T-cell (primary cell): ENCODE measurements at regions of chr9 and their contacts with region 1.

Region 1: DNA sequence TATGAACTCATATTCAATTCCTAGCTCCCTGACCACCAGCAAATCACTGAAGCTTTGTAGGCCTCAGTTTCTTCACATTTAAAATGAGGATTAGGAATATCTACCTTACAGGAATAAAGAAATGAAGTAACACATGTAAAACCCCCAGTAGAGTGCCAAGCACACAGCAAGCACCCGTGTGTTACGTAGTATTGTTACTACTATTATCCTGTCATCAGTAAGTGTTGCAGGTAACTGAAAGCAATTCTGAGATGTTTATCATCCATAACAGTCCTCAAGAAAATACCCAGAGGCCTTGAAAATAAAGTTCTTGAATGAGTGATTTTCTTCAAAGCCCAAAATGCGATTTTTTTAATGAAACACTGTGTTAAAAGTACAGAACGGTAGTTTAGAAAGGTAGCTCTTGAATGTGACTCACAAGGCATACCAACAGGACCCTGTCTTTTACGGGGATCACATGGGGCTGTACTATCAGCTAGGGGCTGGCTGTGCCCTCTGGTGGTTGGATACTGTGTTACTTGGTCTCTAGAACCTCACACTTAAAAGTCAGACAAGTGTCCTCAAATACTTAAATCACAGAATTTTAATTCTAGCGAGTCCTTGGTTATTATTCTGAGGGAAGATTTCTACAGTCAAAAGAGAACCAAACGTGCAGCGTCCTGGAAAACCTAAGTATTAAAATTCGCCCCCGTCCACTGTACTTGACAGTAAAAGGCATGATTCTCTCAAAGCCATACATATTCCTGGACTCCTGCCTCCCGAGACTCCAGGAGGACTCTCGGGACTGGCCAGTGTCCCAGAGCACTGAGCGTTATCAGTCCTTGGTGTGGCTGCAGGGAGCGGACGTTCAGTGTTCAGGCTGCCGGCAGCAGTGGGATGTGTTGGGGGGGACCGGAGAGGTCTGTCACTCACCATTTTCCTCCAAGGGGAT is 725 bp downstream of the NDUFB6 start:
- DNase-seq: peak; percentile 41 to 89 (median 75)
- ATAC-seq: peak; percentile 83 to 87 (median 86)
- H3K4me3 ChIP-seq: peak overlapping the region; percentile 84 to 100
- H3K4me3 Mint-ChIP-seq: peak overlapping the region; percentile 98 to 99 (median 99)
- H3K27ac ChIP-seq: peak overlapping the region; percentile 85
- H3K27ac Mint-ChIP-seq: peak overlapping the region; percentile 98 to 99
- H3K4me1 ChIP-seq: peaks cover 4 to 19% of the 10 kb centered on the region in 2 experiments
- H3K4me1 Mint-ChIP-seq: peaks cover 33 to 36% (median 34%) of the 10 kb centered on the region in 3 donors
- H3K27me3 ChIP-seq: no peaks in the 10 kb centered on the region
- H3K27me3 Mint-ChIP-seq: no peaks in the 10 kb centered on the region

Region 2: DNA sequence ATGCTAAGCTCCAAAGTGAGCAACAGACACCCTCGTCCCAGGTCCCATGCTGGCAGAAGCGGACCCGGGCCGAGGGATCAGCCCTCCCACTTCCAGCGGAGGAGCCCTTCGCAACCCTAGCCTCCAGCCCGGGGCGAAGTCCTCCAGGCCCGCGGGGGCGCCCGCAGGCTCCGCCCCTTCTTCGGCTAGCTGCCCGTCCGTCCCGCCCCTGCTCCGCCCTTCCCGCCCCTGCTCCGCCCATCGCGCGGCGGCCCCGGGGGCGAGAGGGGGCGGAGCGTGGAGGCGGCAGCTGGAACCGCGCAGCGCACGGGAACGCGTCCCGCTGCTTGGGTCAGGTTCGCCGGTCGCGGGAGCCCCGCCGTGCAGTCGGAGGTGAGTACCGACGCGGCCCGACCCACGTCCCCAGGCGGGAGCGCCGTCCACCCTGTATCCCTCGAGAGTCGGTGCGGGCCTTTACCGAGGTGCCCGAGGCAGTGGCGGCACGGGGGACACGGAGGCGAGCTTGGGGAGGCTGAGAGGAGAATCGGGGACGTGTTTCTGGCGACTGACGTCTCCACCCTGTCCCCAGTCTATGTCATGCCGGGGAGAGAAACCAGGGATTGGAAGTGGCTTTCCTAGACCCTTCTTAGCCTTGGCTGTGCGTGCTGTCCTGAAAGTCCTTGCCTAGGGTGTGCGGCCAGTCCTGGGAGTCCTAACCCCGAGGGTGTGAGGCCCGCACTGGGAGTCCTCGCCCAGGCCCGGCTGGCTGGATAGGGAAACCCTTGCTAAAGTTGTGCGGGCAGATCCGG is 187.7 kb before region 1 on chr9 and contains the start of gene ACO1:
- CTCF ChIA-PET with region 1: interaction called, 115 to 201 read pairs
- POLR2A ChIA-PET with region 1: interaction called in 1 of 2 experiments, 6 read pairs
- DNase-seq: peak; percentile 58 to 93 (median 80)
- ATAC-seq: peak; percentile 97 to 98 (median 97)
- H3K4me3 ChIP-seq: peak within 1 kb of the TSS; percentile 75 to 77
- H3K4me3 Mint-ChIP-seq: peak within 1 kb of the TSS; percentile 82 to 85 (median 84)
- H3K27ac ChIP-seq: no peak within 1 kb of the TSS
- H3K27ac Mint-ChIP-seq: peak within 1 kb of the TSS in 1 of 2 donors; percentile 57
- H3K4me1 ChIP-seq: peaks cover 3 to 16% of the 10 kb centered on the region in 2 experiments
- H3K4me1 Mint-ChIP-seq: peaks cover 17 to 26% (median 25%) of the 10 kb centered on the region in 3 donors
- H3K27me3 ChIP-seq: peaks cover 3 to 7% of the 10 kb centered on the region in 2 experiments
- H3K27me3 Mint-ChIP-seq: peaks cover 10 to 11% of the 10 kb centered on the region in 2 donors
- total RNA-seq, gene ACO1: 5.2 to 8.5 (median 8.0) TPM

Region 3: GRCh38 chr9:32442433-32442832 is 129.8 kb before region 1 on chr9:
- CTCF ChIA-PET with region 1: no interaction called
- POLR2A ChIA-PET with region 1: no interaction called
- DNase-seq: no peak
- ATAC-seq: no peak
- H3K4me3 ChIP-seq: no peak overlapping the region
- H3K4me3 Mint-ChIP-seq: no peak overlapping the region
- H3K27ac ChIP-seq: no peak overlapping the region
- H3K27ac Mint-ChIP-seq: no peak overlapping the region
- H3K4me1 ChIP-seq: no peaks in the 10 kb centered on the region
- H3K4me1 Mint-ChIP-seq: no peaks in the 10 kb centered on the region
- H3K27me3 ChIP-seq: no peaks in the 10 kb centered on the region
- H3K27me3 Mint-ChIP-seq: no peaks in the 10 kb centered on the region

Region 4: GRCh38 chr9:32526041-32526706 is 46.1 kb before region 1 on chr9 and contains the start of gene RIGI:
- CTCF ChIA-PET with region 1: interaction called, 3 to 26 read pairs
- POLR2A ChIA-PET with region 1: interaction called in 1 of 2 experiments, 5 read pairs
- DNase-seq: peak; percentile 40 to 92 (median 76)
- ATAC-seq: peak; percentile 78 to 84 (median 83)
- H3K4me3 ChIP-seq: peak within 1 kb of the TSS; percentile 77 to 85
- H3K4me3 Mint-ChIP-seq: peak within 1 kb of the TSS; percentile 87 to 98 (median 92)
- H3K27ac ChIP-seq: peak within 1 kb of the TSS; percentile 74
- H3K27ac Mint-ChIP-seq: peak within 1 kb of the TSS; percentile 97 to 99
- H3K4me1 ChIP-seq: peaks cover 16 to 17% of the 10 kb centered on the region in 2 experiments
- H3K4me1 Mint-ChIP-seq: peaks cover 49 to 64% (median 57%) of the 10 kb centered on the region in 3 donors
- H3K27me3 ChIP-seq: no peaks in the 10 kb centered on the region
- H3K27me3 Mint-ChIP-seq: no peaks in the 10 kb centered on the region
- total RNA-seq, gene RIGI: 14.0 to 27.1 (median 19.3) TPM

Region 5: GRCh38 chr9:32550562-32551433 is 21.4 kb before region 1 on chr9:
- CTCF ChIA-PET with region 1: interaction called, 14 to 78 read pairs
- POLR2A ChIA-PET with region 1: interaction called, 3 to 7 read pairs
- DNase-seq: peak; percentile 86 to 99 (median 97)
- ATAC-seq: peak; percentile 82 to 87 (median 85)
- H3K4me3 ChIP-seq: peak overlapping the region; percentile 89 to 91
- H3K4me3 Mint-ChIP-seq: peak overlapping the region; percentile 91 to 98 (median 97)
- H3K27ac ChIP-seq: peak overlapping the region; percentile 99
- H3K27ac Mint-ChIP-seq: peak overlapping the region; percentile 99 to 100
- H3K4me1 ChIP-seq: peaks cover 13 to 24% of the 10 kb centered on the region in 2 experiments
- H3K4me1 Mint-ChIP-seq: peaks cover 57 to 65% (median 59%) of the 10 kb centered on the region in 3 donors
- H3K27me3 ChIP-seq: no peaks in the 10 kb centered on the region
- H3K27me3 Mint-ChIP-seq: no peaks in the 10 kb centered on the region